Dendritic cell treated with granulocyte-macrophage colony-stimulating factor and Interleukin-4, amounts not matched to agents 40 ng/mL and 50 ng/mL, for 4 days (primary cell): ENCODE measurements at regions of chr19 and their contacts with region 1.

Region 1: GRCh38 chr19:33186431-33187182 is 7.5 kb upstream of the LRP3 start:
- H3K4me3 Mint-ChIP-seq: no peak overlapping the region
- H3K27ac Mint-ChIP-seq: no peak overlapping the region
- H3K4me1 Mint-ChIP-seq: peaks cover 31% of the 10 kb centered on the region
- H3K27me3 Mint-ChIP-seq: peaks cover under 1% of the 10 kb centered on the region

Region 2: GRCh38 chr19:33125929-33126388 is 60.6 kb before region 1 on chr19:
- intact Hi-C with region 1: loop called (anchors 10 kb)
- H3K4me3 Mint-ChIP-seq: no peak overlapping the region
- H3K27ac Mint-ChIP-seq: no peak overlapping the region
- H3K4me1 Mint-ChIP-seq: no peaks in the 10 kb centered on the region
- H3K27me3 Mint-ChIP-seq: no peaks in the 10 kb centered on the region